ENCODE measurements at regions of chr10 and their contacts with region 1.

Region 1: DNA sequence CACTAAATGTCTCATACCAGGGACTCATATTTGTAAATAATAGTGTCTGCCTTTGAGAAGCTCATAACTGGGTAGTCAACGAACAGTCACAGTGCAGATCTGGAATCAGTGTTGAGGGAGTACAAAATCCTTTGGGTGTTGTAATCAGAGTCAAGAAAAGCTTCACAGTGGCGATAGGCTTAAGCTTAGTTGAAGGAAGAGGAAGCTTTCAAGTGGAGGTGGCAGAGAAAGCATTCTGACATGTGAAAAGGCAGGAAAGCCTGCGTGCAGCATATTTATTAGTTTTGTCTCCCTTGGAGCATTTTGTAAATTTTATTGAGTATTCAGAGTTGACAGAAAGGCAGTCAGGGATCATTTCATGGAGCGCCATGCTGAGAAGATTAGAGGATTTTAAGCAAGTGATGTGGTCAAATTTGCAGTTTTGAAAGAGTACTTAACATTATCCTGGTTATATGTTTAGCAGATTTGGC is 104.9 kb downstream of the ADK start:
- DNase-seq: no peak
- ATAC-seq: no peak
- H3K4me3 Mint-ChIP-seq: no peak overlapping the region
- H3K27ac Mint-ChIP-seq: no peak overlapping the region
- H3K4me1 Mint-ChIP-seq: peaks cover 15% of the 10 kb centered on the region
- H3K27me3 Mint-ChIP-seq: no peaks in the 10 kb centered on the region

Region 2: DNA sequence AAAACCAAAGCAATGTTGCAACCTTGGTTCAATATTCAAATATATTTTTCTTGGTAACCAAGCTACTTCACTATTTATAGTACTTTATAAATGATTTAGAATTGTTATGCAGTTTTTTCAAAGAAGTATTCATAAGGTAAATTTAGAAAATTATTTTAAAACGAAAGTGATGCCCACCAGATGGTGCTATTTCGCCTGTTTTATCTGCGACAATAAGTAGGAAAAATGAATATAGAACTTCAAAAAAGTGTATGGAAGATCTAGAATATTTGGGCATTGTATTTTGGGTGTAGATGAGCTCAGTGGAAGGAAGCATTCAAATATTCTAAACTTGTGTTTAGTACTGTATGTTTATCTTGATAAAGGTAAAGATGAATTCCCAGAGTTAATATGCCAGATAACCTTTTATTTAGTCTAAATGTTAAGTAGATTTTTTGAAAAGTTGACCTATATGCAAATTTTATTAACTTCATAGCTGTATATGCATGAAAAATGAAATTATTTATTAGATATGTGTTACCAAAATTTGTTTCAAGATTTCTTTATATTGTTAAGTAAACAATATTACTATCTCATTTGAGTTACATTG is 11.7 kb before region 1 on chr10:
- CTCF ChIA-PET with region 1: interaction called, 15 read pairs
- POLR2A ChIA-PET with region 1: no interaction called
- intact Hi-C with region 1: no loop called
- DNase-seq: peak; percentile 35
- ATAC-seq: no peak
- H3K4me3 Mint-ChIP-seq: no peak overlapping the region
- H3K27ac Mint-ChIP-seq: no peak overlapping the region
- H3K4me1 Mint-ChIP-seq: no peaks in the 10 kb centered on the region
- H3K27me3 Mint-ChIP-seq: no peaks in the 10 kb centered on the region

Measured in activated CD4-positive, alpha-beta T cell treated with anti-CD3 and anti-CD28 coated beads for 36 hours (primary cell).